Activated CD8-positive, alpha-beta T cell treated with anti-CD3 and anti-CD28 coated beads, Interleukin-2, amount 10 ng/mL, durations not matched to agents 7 days and 5 days (primary cell): ENCODE measurements at regions of chr3 and their contacts with region 1.

Region 1: GRCh38 chr3:194344012-194344411 is 7.1 kb downstream of the CPN2 start:
- DNase-seq: peak; percentile 78
- ATAC-seq: peak; percentile 73
- H3K4me3 Mint-ChIP-seq: no peak overlapping the region
- H3K27ac Mint-ChIP-seq: no peak overlapping the region
- H3K4me1 Mint-ChIP-seq: no peaks in the 10 kb centered on the region
- H3K27me3 Mint-ChIP-seq: peaks cover 5% of the 10 kb centered on the region

Region 2: GRCh38 chr3:194333212-194333980 is 10.6 kb before region 1 on chr3:
- CTCF ChIA-PET with region 1: interaction called, 25 read pairs
- POLR2A ChIA-PET with region 1: no interaction called
- DNase-seq: peak; percentile 91
- ATAC-seq: peak; percentile 98
- H3K4me3 Mint-ChIP-seq: peak overlapping the region; percentile 71
- H3K27ac Mint-ChIP-seq: no peak overlapping the region
- H3K4me1 Mint-ChIP-seq: peaks cover 8% of the 10 kb centered on the region
- H3K27me3 Mint-ChIP-seq: peaks cover 18% of the 10 kb centered on the region

Region 3: DNA sequence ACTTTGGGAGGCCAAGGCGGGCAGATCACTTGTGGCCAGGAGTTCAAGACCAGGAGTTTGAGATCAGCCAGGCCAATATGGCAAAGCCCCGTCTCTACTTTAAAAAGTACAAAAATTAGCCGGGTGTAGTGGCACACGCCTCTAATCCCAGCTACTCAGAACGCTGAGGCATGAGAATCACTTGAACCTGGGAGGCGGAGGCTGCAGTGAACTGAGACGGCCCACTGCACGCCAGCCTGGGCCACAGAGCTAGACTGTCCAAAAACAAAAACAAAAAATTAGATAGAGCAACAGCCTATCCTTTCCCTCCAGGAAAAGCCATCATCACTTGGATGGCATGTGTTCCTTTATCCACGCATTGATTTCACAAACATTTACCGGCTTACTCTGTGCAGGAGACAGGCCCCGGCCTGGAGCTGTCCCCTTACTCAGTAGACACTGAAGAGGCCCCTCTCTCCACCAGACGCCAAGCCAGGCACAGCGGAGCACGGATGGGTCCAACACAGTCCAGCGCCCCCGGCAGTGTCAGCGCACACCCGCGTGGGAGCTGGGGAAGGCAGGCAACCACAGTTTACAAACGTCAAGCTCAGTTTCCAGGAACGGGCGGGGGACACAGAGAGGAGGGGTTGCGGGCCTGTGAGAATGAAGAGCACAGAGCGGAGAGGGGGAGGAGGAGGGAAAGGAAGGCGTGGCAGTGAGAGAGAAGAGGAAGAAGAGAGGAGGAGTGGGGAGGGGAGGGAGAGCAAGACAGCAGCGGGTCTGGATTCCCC is 52.0 kb after region 1 on chr3:
- CTCF ChIA-PET with region 1: interaction called, 14 read pairs
- POLR2A ChIA-PET with region 1: no interaction called
- DNase-seq: peak; percentile 72
- ATAC-seq: peak; percentile 57
- H3K4me3 Mint-ChIP-seq: peak overlapping the region; percentile 44
- H3K27ac Mint-ChIP-seq: peak overlapping the region; percentile 54
- H3K4me1 Mint-ChIP-seq: peaks cover 50% of the 10 kb centered on the region
- H3K27me3 Mint-ChIP-seq: peaks cover 22% of the 10 kb centered on the region

Region 4: GRCh38 chr3:194404365-194405140 is 60.5 kb after region 1 on chr3:
- CTCF ChIA-PET with region 1: interaction called, 29 read pairs
- POLR2A ChIA-PET with region 1: no interaction called
- DNase-seq: peak; percentile 60
- ATAC-seq: no peak
- H3K4me3 Mint-ChIP-seq: no peak overlapping the region
- H3K27ac Mint-ChIP-seq: no peak overlapping the region
- H3K4me1 Mint-ChIP-seq: peaks cover 7% of the 10 kb centered on the region
- H3K27me3 Mint-ChIP-seq: no peaks in the 10 kb centered on the region